Adrenal gland (tissue), 19 donors: ENCODE measurements at regions of chrX and their contacts with region 1.

Region 1: DNA sequence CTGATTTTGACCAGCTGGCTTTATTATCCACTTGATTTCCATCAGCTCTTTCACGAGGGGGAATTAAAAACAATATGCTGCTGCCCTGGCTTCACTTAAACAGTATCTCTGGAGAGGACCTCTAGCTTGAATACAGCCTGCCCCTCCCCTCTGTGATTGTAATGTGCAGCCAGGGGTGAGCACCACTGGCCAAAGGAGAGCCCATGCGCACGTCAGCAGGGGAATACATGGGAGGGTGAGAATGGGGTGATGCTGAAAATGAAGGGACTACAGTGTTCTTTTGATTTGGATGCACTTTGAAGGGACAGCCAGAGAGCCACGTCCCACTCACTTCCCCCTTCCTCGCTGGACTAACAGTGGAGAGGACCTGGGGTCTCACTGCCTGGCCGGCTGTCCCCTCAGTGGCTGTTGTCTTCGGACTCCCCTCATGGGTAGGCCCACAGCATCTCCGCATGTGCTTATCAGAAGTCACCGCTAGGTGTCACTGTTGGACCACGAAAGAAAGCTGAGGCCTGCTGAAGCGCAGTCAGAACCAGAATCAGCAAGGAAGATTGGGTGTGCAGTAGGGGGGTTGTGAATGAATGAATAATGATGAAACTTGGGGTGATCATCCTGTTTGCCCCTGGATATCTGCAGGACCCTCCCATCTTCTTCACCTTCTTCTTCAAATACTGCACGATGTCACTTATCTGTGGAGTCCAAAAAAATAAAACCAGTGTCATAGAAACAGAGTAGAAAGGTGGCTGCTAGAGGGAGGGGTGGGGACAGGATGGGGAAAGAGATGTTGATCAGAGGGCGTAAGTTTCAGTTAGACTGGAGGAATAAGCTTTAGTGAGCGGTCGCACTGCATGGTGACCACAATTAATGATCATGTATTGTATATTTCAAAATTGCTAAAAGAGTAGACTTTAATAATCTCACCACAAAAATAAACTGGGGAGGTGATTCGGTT is 32.8 kb downstream of the CLCN4 start:
- DNase-seq: peak; percentile 62 to 88 (median 74)
- H3K4me3 ChIP-seq: no peak overlapping the region
- H3K27ac ChIP-seq: peak overlapping the region in 1 of 5 donors; percentile 6
- H3K4me1 ChIP-seq: peaks cover 0 to 3% of the 10 kb centered on the region in 2 donors
- H3K27me3 ChIP-seq: no peaks in the 10 kb centered on the region
- CTCF ChIP-seq: peak; percentile 62 to 91 (median 82)
- POLR2A ChIP-seq: no peak

Region 2: DNA sequence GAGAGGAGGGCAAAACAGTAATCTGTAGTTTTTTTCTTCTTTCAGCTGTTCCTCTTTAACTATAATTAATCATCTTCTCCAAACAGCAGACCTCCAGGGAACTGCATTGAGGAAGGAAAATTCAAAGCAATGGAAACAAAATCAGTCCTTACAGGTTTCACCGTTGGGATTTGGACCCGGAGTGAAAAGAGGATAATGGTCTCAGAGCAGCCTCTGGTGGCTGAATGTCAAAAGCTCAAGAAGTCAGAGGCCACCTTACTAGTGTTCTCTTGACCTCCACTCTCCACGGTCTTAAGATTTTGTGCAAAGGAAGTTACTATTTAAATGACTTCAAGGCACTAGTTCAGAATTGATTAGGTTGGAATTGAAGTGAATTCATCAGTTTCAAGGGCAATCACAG is 446.7 kb after region 1 on chrX:
- intact Hi-C with region 1: loop called in 1 of 2 experiments (anchors 10 kb)
- DNase-seq: peak; percentile 21 to 68 (median 42)
- H3K4me3 ChIP-seq: peak overlapping the region in 1 of 4 donors; percentile 6
- H3K27ac ChIP-seq: no peak overlapping the region
- H3K4me1 ChIP-seq: no peaks in the 10 kb centered on the region
- H3K27me3 ChIP-seq: no peaks in the 10 kb centered on the region
- CTCF ChIP-seq: peak; percentile 27 to 67 (median 62)
- POLR2A ChIP-seq: no peak

Region 3: DNA sequence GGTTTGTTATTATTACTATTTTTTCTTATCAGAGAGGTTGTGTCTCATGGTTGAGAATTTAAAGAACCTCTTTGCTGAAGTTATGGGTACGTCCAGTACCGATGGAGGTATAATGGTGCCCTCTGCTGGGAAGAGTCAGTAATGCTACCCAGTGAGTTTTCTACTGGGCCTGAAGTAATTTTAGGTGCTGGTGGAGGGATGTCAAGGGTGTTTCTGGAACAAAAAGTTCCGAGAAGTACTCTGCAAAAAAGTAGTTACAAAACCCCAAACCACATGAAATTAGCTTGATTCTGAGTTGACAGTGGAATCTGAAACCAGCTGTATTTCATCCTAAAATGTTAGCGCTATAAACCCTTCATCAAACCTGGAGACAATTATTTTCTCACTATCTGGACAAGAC is 533.3 kb after region 1 on chrX:
- intact Hi-C with region 1: loop called in 1 of 2 experiments (anchors 10 kb)
- DNase-seq: peak; percentile 41 to 78 (median 57)
- H3K4me3 ChIP-seq: no peak overlapping the region
- H3K27ac ChIP-seq: no peak overlapping the region
- H3K4me1 ChIP-seq: no peaks in the 10 kb centered on the region
- H3K27me3 ChIP-seq: no peaks in the 10 kb centered on the region
- CTCF ChIP-seq: peak; percentile 52 to 79 (median 65)
- POLR2A ChIP-seq: no peak

Region 4: DNA sequence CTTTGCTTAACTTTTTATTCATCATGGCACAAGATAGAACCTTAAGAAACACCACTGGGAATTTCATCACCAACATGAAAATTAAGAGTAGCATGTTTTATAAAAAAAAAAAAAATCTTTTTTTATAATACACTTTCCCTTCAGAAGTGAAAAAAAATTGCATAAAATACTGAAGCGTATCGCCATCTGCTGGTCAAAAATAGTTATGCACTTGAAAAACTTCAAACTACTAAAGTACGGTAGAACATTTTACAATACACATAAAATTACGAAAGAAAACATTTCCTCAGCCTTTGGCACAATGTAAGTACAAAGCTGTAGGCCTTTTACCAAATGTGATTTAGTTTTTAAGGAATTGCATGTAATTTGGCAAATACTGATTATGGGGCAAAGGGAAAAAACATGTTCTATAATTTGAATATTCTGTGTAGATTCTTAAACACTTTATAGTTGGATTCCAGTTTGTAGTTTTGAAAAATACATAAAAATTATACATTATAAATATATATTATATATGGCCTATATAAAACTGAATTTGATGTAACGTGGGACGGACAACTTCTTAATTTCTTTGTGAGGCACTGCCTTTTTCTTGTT is 948.0 kb after region 1 on chrX:
- intact Hi-C with region 1: loop called (anchors 10 kb)
- DNase-seq: no peak
- H3K4me3 ChIP-seq: no peak overlapping the region
- H3K27ac ChIP-seq: no peak overlapping the region
- H3K4me1 ChIP-seq: no peaks in the 10 kb centered on the region
- H3K27me3 ChIP-seq: peaks cover 14% of the 10 kb centered on the region
- CTCF ChIP-seq: peak; percentile 46 to 81 (median 54)
- POLR2A ChIP-seq: no peak